RWPE1 (cell line): ENCODE measurements at regions of chr19 and their contacts with region 1.

Region 1: GRCh38 chr19:2648528-2648937 is 54.0 kb downstream of the GNG7 start:
- DNase-seq: peak; percentile 83
- H3K27ac ChIP-seq: no peak overlapping the region
- CTCF ChIP-seq: peak; percentile 75

Region 2: DNA sequence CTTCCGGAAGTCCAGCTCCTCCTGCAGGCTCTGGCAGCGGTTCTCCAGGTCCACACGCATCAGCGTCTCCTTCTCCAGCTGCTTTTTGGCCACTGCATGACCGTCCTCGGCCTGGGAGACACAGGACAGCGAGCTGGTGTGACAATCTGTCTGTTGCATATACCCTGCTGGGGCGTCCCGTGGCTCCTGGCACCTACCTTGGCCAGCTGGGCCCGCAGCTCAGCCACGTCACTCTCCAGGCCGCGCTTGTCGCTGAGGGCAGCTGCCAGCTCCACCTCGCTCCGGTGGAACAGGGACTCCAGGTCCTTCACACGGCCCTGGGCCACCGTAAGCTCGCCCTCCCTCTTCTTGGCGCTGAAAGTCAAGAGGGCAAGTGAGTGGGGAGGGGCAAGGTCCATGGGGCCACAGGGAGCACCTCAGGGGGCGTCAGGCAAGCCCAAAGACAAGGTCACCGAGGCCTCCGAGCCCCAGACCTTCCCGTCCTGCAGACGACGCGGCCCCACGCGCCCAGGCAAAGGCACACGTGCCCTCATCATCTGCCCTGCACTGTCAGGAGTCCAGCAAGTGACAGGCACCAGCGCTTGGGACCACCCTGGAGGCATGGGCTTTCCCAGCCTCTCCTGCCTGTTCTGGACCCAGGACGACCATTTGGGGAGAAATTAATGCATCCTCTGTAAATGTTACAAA is 210.2 kb before region 1 on chr19:
- CTCF ChIA-PET with region 1: no interaction called
- POLR2A ChIA-PET with region 1: no interaction called
- DNase-seq: no peak
- H3K27ac ChIP-seq: 0 out of 2 replicates have a peak overlapping the region, but pooled peaks have one; percentile 13
- CTCF ChIP-seq: no peak

Region 3: DNA sequence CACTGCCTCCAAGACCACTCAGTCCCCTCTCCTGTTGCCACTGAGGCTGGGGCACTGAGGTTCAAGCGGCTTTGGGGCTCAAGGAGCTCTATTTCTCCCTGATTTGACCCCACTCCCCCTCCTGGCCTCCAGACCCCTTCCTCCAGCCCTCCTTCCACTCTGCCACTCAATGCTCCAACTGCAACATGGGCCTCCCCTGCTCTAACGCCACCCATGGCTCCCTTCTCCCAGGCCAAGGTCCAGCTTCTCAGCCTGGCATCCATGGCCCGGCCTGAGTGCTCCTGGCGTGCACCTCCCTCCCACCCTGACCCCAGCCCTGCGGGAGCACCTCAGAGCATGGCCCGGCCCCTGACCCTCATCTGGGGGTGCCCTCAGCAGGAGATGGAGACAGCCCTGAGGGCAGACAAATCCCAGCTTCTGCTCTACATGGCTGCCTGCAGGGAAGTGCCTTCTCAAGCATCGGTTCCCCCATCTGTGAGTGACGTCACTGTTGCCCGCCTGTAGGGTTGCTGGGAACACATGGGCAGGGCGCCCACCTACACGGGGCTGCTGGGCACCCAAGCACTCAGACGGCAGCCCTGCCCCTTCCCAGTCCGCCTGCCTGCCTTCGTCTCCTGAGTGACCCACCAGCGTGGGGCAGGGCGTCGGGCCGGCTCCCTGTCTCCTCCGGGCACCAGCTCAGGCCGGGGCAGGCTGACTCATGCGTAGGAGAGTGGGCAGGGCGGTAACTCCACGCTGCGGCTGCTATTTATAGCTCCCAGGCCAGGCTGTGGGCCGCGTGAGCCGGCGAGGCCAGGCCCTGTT is 74.2 kb after region 1 on chr19:
- CTCF ChIA-PET with region 1: interaction called, 10 read pairs
- POLR2A ChIA-PET with region 1: no interaction called
- DNase-seq: peak; percentile 66
- H3K27ac ChIP-seq: peak overlapping the region; percentile 25; the same call in 1 of the 2 replicates
- CTCF ChIP-seq: no peak

Region 4: DNA sequence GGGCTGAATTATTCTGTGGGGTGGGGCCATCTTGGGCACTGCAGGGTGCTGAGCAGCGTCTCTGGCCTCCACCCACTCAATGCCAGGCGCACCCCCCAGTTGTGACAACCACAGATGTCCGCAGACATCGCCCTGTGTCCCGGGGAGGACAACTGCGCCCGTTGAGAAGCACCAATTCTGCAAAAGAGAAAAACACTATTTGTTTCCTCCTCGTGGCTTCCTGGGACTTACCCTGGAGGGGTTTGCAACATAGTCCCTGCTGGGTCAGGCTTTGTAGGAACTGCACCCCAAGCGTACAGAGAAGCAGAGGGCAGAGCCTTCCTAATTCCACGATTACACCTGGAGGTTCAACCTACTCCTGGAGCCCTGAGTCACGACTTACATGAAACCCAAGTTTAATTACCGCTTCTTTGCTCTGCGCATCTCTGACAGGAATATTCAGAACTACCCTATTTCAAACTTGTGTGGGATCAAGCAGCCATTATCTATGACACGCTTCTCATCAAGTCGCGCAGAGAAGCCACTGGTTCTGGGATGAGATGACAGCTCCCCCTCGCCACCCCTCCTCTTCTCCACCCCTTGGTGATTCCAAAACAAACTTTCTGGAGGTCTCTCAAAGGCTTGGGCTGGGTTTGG is 102.4 kb after region 1 on chr19:
- CTCF ChIA-PET with region 1: interaction called, 44 read pairs
- POLR2A ChIA-PET with region 1: no interaction called
- DNase-seq: no peak
- H3K27ac ChIP-seq: no peak overlapping the region
- CTCF ChIP-seq: no peak